ENCODE measurements at regions of chr4 and their contacts with region 1.

Region 1: GRCh38 chr4:74228691-74229640 is 71.0 kb downstream of the MTHFD2L start:
- DNase-seq: peak; percentile 88
- ATAC-seq: peak; percentile 98
- H3K4me3 Mint-ChIP-seq: no peak overlapping the region
- H3K27ac Mint-ChIP-seq: no peak overlapping the region
- H3K4me1 Mint-ChIP-seq: no peaks in the 10 kb centered on the region
- H3K27me3 Mint-ChIP-seq: no peaks in the 10 kb centered on the region
- CTCF ChIP-seq: peak; percentile 85

Region 2: GRCh38 chr4:74189331-74190043 is 39.5 kb before region 1 on chr4:
- CTCF ChIA-PET with region 1: interaction called, 20 read pairs
- POLR2A ChIA-PET with region 1: no interaction called
- DNase-seq: no peak
- ATAC-seq: peak; percentile 64
- H3K4me3 Mint-ChIP-seq: no peak overlapping the region
- H3K27ac Mint-ChIP-seq: no peak overlapping the region
- H3K4me1 Mint-ChIP-seq: peaks cover 7% of the 10 kb centered on the region
- H3K27me3 Mint-ChIP-seq: no peaks in the 10 kb centered on the region
- CTCF ChIP-seq: peak; percentile 18; the same call in 1 of the 2 replicates

Region 3: GRCh38 chr4:74217365-74217764 is 11.6 kb before region 1 on chr4:
- CTCF ChIA-PET with region 1: interaction called, 20 read pairs
- POLR2A ChIA-PET with region 1: no interaction called
- DNase-seq: no peak
- ATAC-seq: no peak
- H3K4me3 Mint-ChIP-seq: no peak overlapping the region
- H3K27ac Mint-ChIP-seq: no peak overlapping the region
- H3K4me1 Mint-ChIP-seq: peaks cover 33% of the 10 kb centered on the region
- H3K27me3 Mint-ChIP-seq: no peaks in the 10 kb centered on the region
- CTCF ChIP-seq: no peak

Region 4: DNA sequence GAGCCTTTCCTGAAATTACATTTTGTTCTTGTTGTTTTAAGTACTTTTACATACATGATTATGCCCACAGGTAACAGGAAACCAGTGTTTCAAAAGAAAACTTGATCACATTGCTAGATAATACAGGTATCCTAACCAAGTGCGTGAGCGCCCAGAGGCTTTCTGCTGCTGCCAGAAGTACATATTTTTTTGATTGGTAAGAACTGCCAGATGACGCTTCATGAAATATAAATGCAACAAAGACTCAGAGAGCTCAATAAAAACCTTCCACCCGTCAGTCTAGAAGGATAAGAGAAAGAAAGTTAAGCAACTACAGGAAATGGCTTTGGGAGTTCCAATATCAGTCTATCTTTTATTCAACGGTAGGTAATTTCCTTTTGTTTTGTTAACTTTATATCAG is 79.2 kb after region 1 on chr4 and contains the start of gene EPGN:
- CTCF ChIA-PET with region 1: interaction called, 26 read pairs
- POLR2A ChIA-PET with region 1: interaction called, 3 read pairs
- DNase-seq: no peak
- ATAC-seq: no peak
- H3K4me3 Mint-ChIP-seq: no peak within 1 kb of the TSS
- H3K27ac Mint-ChIP-seq: no peak within 1 kb of the TSS
- H3K4me1 Mint-ChIP-seq: no peaks in the 10 kb centered on the region
- H3K27me3 Mint-ChIP-seq: no peaks in the 10 kb centered on the region
- CTCF ChIP-seq: no peak
- total RNA-seq, gene EPGN: not detected in 3 replicates

Region 5: DNA sequence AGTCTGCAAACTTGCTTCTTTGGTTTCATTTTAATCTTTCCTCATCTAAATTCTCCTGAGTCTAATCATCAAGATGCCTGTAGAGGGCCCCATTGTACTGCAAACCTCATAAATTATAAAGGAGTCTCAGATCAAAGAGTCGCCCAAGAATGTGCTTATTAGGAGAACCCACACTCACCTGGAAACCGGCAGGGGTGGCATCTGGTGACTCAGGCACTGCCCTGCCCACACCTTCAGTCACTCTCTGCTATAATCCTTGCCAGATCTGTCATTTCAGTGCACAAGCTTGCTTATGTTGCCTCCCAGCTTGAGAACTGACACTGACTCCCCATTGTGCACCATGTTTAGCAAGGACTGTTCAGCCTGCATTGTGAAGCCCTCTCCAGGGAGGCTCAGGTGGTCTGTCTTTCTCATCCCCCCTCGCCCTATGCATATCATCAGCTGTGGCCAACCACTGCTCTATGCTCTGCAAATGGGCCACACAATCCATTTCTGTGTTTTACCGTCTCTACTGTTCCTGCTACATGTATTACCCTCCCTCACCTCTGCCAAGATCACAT is 91.7 kb after region 1 on chr4:
- CTCF ChIA-PET with region 1: interaction called, 13 read pairs
- POLR2A ChIA-PET with region 1: no interaction called
- DNase-seq: peak; percentile 52
- ATAC-seq: peak; percentile 95
- H3K4me3 Mint-ChIP-seq: no peak overlapping the region
- H3K27ac Mint-ChIP-seq: no peak overlapping the region
- H3K4me1 Mint-ChIP-seq: peaks cover 21% of the 10 kb centered on the region
- H3K27me3 Mint-ChIP-seq: no peaks in the 10 kb centered on the region
- CTCF ChIP-seq: peak; percentile 26; the same call in 1 of the 2 replicates

Region 6: GRCh38 chr4:74376888-74377483 is 148.0 kb after region 1 on chr4:
- CTCF ChIA-PET with region 1: interaction called, 5 read pairs
- POLR2A ChIA-PET with region 1: interaction called, 10 read pairs
- DNase-seq: no peak
- ATAC-seq: peak; percentile 51; the same call in 1 of the 2 replicates
- H3K4me3 Mint-ChIP-seq: no peak overlapping the region
- H3K27ac Mint-ChIP-seq: no peak overlapping the region
- H3K4me1 Mint-ChIP-seq: peaks cover 10% of the 10 kb centered on the region; the same call in 1 of the 2 replicates
- H3K27me3 Mint-ChIP-seq: no peaks in the 10 kb centered on the region
- CTCF ChIP-seq: 0 out of 2 replicates have a peak, but pooled peaks have one; percentile 18

Region 7: DNA sequence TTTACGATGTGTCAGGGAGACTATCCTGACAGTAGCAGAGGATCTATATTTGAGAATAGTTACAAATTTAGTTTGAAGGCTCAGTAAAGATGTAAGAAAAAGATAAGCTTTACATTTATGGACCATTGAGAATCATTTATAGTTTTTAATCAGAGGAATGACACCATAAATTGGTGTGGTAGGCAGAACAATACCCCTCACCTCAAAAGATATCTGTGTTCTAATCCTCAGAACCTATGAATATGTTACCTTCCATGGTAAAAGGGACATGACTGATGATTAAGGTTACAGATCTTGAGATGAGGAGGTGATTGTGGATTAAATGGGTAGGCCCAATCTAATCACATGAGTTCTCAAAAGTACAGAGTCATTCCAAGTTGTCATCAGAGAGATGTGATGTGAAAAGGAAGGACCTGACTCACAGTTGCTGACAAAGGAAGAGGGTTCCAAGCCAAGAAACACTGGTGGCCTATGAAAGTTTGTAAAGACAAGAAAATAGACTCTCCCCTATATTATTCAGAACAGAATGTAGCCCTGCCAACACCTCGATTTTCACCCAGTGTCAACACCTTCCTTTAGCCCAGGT is 163.0 kb after region 1 on chr4:
- CTCF ChIA-PET with region 1: no interaction called
- POLR2A ChIA-PET with region 1: no interaction called
- DNase-seq: no peak
- ATAC-seq: no peak
- H3K4me3 Mint-ChIP-seq: no peak overlapping the region
- H3K27ac Mint-ChIP-seq: no peak overlapping the region
- H3K4me1 Mint-ChIP-seq: no peaks in the 10 kb centered on the region
- H3K27me3 Mint-ChIP-seq: no peaks in the 10 kb centered on the region
- CTCF ChIP-seq: no peak

Region 8: GRCh38 chr4:74675673-74676279 is 446.8 kb after region 1 on chr4:
- CTCF ChIA-PET with region 1: interaction called, 10 read pairs
- POLR2A ChIA-PET with region 1: no interaction called
- DNase-seq: no peak
- ATAC-seq: peak; percentile 81
- H3K4me3 Mint-ChIP-seq: no peak overlapping the region
- H3K27ac Mint-ChIP-seq: no peak overlapping the region
- H3K4me1 Mint-ChIP-seq: peaks cover 3% of the 10 kb centered on the region
- H3K27me3 Mint-ChIP-seq: no peaks in the 10 kb centered on the region
- CTCF ChIP-seq: peak; percentile 37; the same call in 1 of the 2 replicates

Measured in WTC11 (cell line).